K562 (cell line): ENCODE measurements at regions of chr9 and their contacts with region 1.

Region 1: DNA sequence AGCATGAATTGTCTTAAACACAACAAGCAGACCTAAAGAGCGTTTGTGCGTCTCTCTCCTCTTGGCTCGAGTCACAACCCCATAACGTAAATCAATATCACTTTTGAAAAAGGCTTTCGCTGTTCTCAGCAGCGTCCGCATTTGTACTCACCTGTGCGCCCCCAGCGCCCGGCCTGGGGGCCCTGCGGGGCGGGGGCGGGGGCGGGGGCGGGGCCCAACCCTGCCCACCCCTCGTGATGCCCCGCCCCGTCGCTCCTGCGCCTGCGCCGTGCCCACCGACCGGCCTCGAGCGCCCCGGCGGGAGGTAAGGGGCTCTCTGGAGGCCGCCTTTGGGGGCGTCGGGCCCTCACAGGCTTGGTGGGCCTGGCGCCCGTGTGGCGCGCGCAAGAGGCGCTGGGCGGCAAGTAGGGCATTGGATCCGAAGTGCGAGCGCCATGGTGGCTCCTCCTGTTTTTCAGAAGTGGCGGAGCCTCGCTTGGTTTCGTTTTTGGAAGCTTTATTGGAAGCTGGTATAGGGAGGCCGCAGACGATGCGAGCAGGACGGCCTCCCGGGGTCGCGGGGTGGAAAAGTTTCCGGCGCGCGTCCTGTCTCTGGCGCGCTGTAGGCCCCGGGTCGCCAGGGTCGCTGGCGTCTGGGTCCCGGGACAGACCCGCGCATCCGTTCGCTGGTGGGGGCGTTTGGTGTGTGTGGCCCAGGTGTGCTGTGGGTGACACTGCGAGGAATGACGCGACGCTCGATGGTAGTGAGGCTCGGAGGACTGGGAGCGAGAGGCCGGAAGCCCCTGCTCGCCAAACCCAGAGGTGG is at the start of gene STX17:
- DNase-seq: peak; percentile 79 to 97 (median 96)
- ATAC-seq: peak; percentile 91
- H3K4me3 ChIP-seq: peak within 1 kb of the TSS; percentile 96
- H3K27ac ChIP-seq: peak within 1 kb of the TSS; percentile 95
- H3K4me1 ChIP-seq: peaks cover 0 to 6% of the 10 kb centered on the region in 2 experiments; a peak in 2 of 5 replicates
- H3K27me3 ChIP-seq: no peaks in the 10 kb centered on the region
- CTCF ChIP-seq: 0 out of 6 replicates have a peak, but pooled peaks of 1 of the 3 experiments have one; percentile 0
- EP300 ChIP-seq: no peak
- POLR2A ChIP-seq: peak; percentile 83
- RAD21 ChIP-seq: no peak; a peak in 1 of 4 replicates
- polyA plus RNA-seq, gene STX17: 14.9 to 17.1 TPM

Region 2: DNA sequence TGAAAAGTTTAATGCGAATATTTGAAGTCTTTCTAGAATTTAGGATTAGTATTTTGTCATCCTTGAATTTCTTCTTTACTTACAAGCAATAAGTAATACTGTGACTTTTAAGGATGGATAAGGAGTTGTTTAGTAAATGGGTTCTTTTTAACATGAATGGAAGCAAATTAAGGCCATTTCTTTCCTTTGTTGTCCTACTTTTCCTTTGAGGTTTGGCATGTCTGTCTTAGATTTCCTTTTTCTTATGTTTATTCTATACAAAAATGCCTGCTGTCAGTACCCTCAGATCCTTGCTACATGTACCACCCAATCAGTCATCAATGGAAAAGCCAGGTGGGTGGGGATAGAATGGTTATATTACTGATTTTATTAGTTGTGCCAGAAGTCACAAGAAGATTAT is 10.0 kb after region 1 on chr9:
- CTCF ChIA-PET with region 1: no interaction called
- POLR2A ChIA-PET with region 1: interaction called, 12 read pairs
- in situ Hi-C with region 1: no loop called
- intact Hi-C with region 1: no loop called
- DNase-seq: no peak
- ATAC-seq: no peak
- H3K4me3 ChIP-seq: no peak overlapping the region
- H3K27ac ChIP-seq: no peak overlapping the region
- H3K4me1 ChIP-seq: no peaks in the 10 kb centered on the region; a peak in 1 of 5 replicates
- H3K27me3 ChIP-seq: no peaks in the 10 kb centered on the region
- CTCF ChIP-seq: no peak
- EP300 ChIP-seq: no peak
- POLR2A ChIP-seq: no peak
- RAD21 ChIP-seq: no peak